ENCODE measurements at regions of chr1 and their contacts with region 1.

Region 1: DNA sequence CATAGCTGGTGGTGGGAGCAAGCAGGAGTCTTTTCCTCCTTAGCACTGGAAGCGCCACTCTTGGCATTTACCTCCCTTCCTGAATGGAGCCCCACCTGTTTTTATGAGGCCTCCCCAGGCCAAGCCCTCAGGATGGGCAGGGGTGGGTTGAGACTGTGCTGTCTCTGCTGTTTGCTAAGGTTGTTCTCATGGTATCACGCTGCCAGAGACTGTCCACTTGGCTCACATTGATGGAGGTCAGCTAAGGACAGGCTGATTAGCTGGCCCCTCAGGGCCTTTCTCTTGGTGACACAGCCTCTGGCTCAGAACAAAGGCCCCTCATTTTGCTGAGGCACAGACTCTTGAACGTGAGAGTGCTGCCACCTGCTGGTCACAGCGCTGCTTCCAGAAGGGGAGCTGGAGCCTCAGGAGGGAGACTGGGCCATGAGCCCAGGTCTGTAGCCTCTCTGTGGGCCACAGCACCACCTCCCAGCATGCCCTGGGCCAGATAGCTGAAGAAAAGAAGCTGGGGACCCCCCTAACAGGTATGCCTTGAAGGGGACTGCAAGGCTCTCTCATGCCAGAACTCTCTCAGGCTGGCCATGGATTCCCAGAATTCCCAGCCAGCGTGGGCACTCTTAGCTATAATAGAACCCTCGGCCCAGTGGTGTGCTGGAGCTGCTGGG is 85.6 kb downstream of the CD58 start:
- DNase-seq: peak; percentile 89 to 92
- ATAC-seq: peak; percentile 83 to 93 (median 88)
- H3K4me3 ChIP-seq: no peak overlapping the region
- H3K27ac ChIP-seq: peak overlapping the region in 2 of 10 donors; percentile 33 to 39
- H3K4me1 ChIP-seq: peaks cover 9 to 42% (median 26%) of the 10 kb centered on the region in 9 donors
- H3K27me3 ChIP-seq: no peaks in the 10 kb centered on the region
- CTCF ChIP-seq: peak; percentile 80 to 98 (median 96)

Region 2: DNA sequence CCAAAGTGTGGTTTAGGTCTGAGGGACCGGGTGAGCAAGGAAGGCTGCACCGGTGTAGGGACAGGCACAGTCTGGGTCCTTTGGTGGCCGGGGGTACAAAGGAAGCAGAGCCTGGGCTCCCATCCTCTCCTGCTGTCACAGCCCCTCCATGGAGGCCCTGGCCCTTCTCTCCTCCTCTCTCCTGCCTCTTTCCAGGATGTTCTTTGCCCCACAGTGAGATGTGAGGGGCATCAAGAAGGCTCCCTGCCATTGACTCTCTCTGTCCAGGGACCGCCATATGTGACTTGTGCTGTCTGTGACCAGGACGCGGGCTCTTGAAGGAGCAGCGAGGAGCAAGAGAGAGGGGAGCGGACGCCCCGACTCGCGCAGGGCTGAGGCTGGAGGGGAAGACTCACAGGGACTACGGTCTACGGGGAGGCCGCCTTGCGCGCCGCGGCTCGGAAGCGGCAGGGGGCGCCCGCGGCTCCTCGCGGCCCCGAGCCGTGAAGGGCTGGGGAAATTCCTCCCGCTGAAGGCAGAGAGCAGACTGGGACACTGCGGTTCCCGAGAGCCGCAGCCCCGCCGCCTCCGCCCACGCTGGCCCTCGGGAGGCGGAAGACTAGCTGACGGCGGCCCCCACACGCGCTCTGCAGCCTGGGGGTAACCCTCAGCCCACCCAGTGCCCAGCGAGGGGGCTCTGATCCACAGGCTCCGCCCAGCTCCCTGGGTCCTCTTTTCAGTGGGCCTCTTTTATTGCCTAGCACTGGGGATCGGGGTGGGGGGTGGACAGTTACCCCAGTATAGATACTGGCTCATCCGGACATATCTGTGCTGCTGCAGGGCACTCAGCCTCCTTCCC is 333.2 kb before region 1 on chr1:
- intact Hi-C with region 1: loop called in 6 of 10 experiments (anchors 1 to 5 kb)
- DNase-seq: peak; percentile 70 to 75
- ATAC-seq: peak; percentile 90 to 97 (median 96)
- H3K4me3 ChIP-seq: peak overlapping the region in 9 of 10 donors; percentile 42 to 60 (median 52)
- H3K27ac ChIP-seq: peak overlapping the region; percentile 43 to 85 (median 75)
- H3K4me1 ChIP-seq: peaks cover 5 to 30% (median 11%) of the 10 kb centered on the region in 9 donors
- H3K27me3 ChIP-seq: no peaks in the 10 kb centered on the region
- CTCF ChIP-seq: peak; percentile 87 to 99 (median 93)

Region 3: GRCh38 chr1:116224573-116224972 is 260.6 kb before region 1 on chr1:
- intact Hi-C with region 1: loop called in 1 of 10 experiments (anchors 5 kb)
- DNase-seq: no peak
- ATAC-seq: no peak
- H3K4me3 ChIP-seq: no peak overlapping the region
- H3K27ac ChIP-seq: no peak overlapping the region
- H3K4me1 ChIP-seq: no peaks in the 10 kb centered on the region
- H3K27me3 ChIP-seq: no peaks in the 10 kb centered on the region
- CTCF ChIP-seq: no peak

Region 4: DNA sequence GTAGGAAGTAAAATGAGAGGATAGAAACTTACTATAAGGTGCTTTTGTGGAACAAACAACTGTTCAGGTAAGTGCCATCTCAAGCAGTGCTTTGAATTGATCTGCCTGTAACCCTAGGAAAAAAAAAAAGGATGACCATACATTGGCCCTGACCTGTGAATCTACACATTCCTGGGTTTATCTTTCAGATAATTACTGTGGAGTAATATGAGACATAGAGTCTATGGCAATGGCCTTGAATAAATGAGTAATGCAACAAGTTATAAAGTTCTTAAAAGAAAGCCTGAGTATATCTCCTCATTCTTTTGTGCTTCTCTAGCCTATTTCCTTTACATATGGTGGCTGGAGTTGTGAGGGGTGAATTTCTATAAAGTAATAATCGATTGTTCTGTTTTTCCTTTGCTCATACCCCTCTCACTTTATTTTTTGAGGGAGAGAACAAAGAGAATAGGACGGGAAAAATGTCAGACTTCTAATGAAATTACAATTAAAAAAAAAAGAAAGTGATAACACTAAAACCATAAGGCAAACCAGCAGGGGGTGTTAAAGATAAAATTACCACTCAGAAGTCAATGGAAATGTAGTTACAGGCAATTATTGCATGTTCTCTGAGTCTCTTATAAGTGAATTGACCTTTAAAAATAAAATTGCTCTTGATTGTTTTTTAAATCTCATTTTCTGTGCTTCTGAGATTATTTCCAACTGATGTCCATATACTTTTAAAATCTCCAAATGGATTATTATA is 124.6 kb before region 1 on chr1:
- intact Hi-C with region 1: loop called (anchors 2 to 10 kb)
- DNase-seq: no peak
- ATAC-seq: no peak
- H3K4me3 ChIP-seq: no peak overlapping the region
- H3K27ac ChIP-seq: no peak overlapping the region
- H3K4me1 ChIP-seq: peaks cover under 1 to 15% (median 7%) of the 10 kb centered on the region in 9 donors
- H3K27me3 ChIP-seq: no peaks in the 10 kb centered on the region
- CTCF ChIP-seq: peak; percentile 8 to 62 (median 45)

Region 5: GRCh38 chr1:116418091-116418830 is 66.9 kb before region 1 on chr1:
- intact Hi-C with region 1: loop called in 2 of 10 experiments (anchors 5 to 10 kb)
- DNase-seq: peak; percentile 83 to 87
- ATAC-seq: peak; percentile 68 to 87 (median 78)
- H3K4me3 ChIP-seq: peak overlapping the region; percentile 57 to 90 (median 82)
- H3K27ac ChIP-seq: peak overlapping the region; percentile 28 to 92 (median 88)
- H3K4me1 ChIP-seq: peaks cover 5 to 47% (median 28%) of the 10 kb centered on the region in 9 donors
- H3K27me3 ChIP-seq: no peaks in the 10 kb centered on the region
- CTCF ChIP-seq: peak in 2 of 9 donors; percentile 5 to 11

Region 6: GRCh38 chr1:116754198-116754977 is 269.2 kb after region 1 on chr1 and contains the start of gene CD2:
- intact Hi-C with region 1: no loop called
- DNase-seq: no peak
- ATAC-seq: no peak
- H3K4me3 ChIP-seq: peak within 1 kb of the TSS in 2 of 10 donors; percentile 17 to 50
- H3K27ac ChIP-seq: peak within 1 kb of the TSS in 1 of 10 donors; percentile 84
- H3K4me1 ChIP-seq: peaks cover 0 to 19% (median 0%) of the 10 kb centered on the region in 9 donors
- H3K27me3 ChIP-seq: no peaks in the 10 kb centered on the region
- CTCF ChIP-seq: no peak
- total RNA-seq, gene CD2: 0.20 to 6.5 (median 1.2) TPM in 7 of 10 donors, not detected in the others